ENCODE measurements at regions of chr19 and their contacts with region 1.

Region 1: GRCh38 chr19:13784731-13785452 is 10.4 kb upstream of the ZSWIM4 start:
- DNase-seq: peak; percentile 82 to 84 (median 84)
- ATAC-seq: peak; percentile 72
- H3K4me3 ChIP-seq: no peak overlapping the region
- H3K4me1 ChIP-seq: peaks cover 21% of the 10 kb centered on the region
- CTCF ChIP-seq: peak; percentile 43

Region 2: GRCh38 chr19:13228561-13228960 is 556.3 kb before region 1 on chr19:
- intact Hi-C with region 1: no loop called
- DNase-seq: no peak
- ATAC-seq: no peak
- H3K4me3 ChIP-seq: no peak overlapping the region
- H3K4me1 ChIP-seq: no peaks in the 10 kb centered on the region
- CTCF ChIP-seq: no peak

Region 3: GRCh38 chr19:13665125-13665905 is 119.6 kb before region 1 on chr19:
- intact Hi-C with region 1: no loop called
- DNase-seq: peak in 1 of 3 donors; percentile 62
- ATAC-seq: peak; percentile 61
- H3K4me3 ChIP-seq: no peak overlapping the region
- H3K4me1 ChIP-seq: peaks cover 6% of the 10 kb centered on the region
- CTCF ChIP-seq: no peak

Region 4: GRCh38 chr19:13839130-13839937 is 54.4 kb after region 1 on chr19:
- intact Hi-C with region 1: no loop called
- DNase-seq: peak; percentile 85 to 94 (median 90)
- ATAC-seq: peak; percentile 44
- H3K4me3 ChIP-seq: peak overlapping the region; percentile 11
- H3K4me1 ChIP-seq: peaks cover 48% of the 10 kb centered on the region
- CTCF ChIP-seq: no peak

Region 5: DNA sequence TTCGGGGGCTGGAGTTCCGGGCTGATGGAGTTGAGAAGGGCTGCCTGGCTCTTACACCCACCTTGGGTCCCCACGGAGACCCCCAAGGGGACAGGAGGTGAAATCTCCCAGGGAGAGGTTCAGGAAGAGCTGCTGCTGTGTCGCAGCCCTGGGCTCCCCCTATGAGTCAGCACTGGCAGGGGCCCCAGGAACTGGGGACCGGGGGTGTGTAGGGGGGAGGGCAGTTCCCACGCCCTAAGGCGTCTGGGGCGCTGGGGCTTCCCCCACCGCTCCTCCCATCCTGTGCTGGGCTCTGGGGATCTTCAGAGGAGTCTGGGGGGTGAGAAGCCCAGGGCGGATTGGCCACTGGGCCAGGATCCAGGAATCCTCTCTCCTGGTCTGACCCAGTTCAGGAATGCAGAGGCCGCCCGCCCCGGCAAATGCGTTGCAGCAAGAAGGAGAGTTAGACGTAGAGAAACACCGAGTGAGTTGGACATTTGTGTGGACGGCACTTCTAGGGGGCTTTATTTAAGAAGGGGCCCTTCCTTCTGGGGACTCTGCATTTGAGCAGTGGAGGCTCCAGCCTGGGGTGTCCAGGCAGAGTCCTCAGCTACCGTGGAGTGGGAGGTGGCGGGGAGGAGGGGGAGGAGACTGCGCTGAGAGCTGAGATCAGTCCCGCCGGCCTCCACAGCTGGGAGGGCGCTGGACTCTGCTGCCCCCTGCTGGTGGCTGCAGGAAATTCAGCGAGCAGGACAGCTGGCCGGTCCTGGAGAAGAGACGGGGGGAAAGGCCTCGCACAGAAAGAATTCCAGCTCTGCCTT is 77.0 kb after region 1 on chr19:
- intact Hi-C with region 1: loop called (anchors 5 kb)
- DNase-seq: peak; percentile 93 to 97 (median 94)
- ATAC-seq: peak; percentile 94
- H3K4me3 ChIP-seq: no peak overlapping the region
- H3K4me1 ChIP-seq: peaks cover 11% of the 10 kb centered on the region
- CTCF ChIP-seq: peak; percentile 95